ENCODE measurements at regions of chr16 and their contacts with region 1.

Region 1: DNA sequence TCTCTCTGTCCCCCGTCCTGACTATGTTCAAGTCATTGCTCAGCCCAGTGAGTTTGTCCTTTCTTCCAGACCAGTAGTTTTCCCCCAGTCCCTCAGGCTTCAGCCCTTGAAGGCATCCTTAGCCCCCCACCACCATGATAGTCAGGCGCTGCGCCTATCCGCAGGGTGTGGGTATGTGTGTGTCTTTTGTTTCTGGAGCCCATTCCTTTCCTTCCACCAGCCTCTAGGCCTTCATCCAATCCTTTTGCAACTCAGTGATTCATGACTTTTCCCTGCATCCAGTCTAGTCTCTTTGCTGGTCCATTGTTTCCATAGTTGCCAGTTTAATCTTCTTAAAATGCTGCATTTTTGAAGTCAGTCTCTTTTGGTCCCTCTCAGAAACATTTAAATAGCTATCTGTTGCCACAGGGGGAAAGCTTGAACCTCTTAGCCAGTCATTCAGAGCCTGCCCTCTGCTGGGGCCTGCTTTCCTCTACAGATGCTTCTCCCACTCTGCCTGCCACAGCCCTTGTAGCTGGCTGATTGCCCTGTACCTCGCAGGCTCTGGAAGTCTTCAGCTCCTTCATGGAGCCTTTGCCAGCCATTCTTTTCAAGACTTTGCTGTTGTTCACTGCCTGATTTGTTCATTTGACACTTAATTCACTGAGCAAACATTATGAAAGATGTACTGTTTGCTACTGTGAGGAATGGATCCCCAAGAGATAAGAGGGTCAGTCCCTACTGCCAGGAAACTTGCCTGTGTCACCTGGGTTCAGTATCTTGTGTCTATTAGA is 55.9 kb upstream of the ADCY7 start:
- DNase-seq: peak; percentile 74
- ATAC-seq: peak; percentile 95
- H3K4me3 Mint-ChIP-seq: no peak overlapping the region
- H3K27ac Mint-ChIP-seq: peak overlapping the region; percentile 93
- H3K4me1 Mint-ChIP-seq: peaks cover 18% of the 10 kb centered on the region
- H3K27me3 Mint-ChIP-seq: no peaks in the 10 kb centered on the region
- CTCF ChIP-seq: no peak

Region 2: DNA sequence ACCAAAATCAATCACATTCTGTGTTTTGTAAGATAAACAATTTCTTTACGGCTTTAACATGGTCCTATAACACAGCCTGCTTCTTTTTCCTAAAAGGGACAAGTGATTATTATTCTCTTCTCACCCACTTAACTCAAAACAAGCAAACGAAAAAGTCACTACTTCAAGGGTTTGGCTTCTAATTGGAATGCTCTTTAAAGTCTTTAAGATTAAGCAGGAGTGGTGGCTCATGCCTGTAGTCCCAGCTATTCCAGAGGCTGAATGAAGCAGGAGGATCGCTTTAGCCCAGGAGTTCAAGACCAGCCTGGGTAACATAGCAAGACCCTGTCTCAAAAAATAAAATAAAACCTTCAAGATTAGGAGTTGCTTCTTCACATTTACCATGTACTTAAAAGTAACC is 252.0 kb before region 1 on chr16:
- CTCF ChIA-PET with region 1: interaction called, 15 read pairs
- POLR2A ChIA-PET with region 1: no interaction called
- DNase-seq: no peak
- ATAC-seq: no peak
- H3K4me3 Mint-ChIP-seq: no peak overlapping the region
- H3K27ac Mint-ChIP-seq: no peak overlapping the region
- H3K4me1 Mint-ChIP-seq: no peaks in the 10 kb centered on the region; the same call in 1 of the 2 replicates
- H3K27me3 Mint-ChIP-seq: no peaks in the 10 kb centered on the region
- CTCF ChIP-seq: no peak

Region 3: GRCh38 chr16:50002190-50002589 is 208.3 kb before region 1 on chr16:
- CTCF ChIA-PET with region 1: no interaction called
- POLR2A ChIA-PET with region 1: no interaction called
- DNase-seq: no peak
- ATAC-seq: no peak
- H3K4me3 Mint-ChIP-seq: no peak overlapping the region
- H3K27ac Mint-ChIP-seq: no peak overlapping the region
- H3K4me1 Mint-ChIP-seq: no peaks in the 10 kb centered on the region
- H3K27me3 Mint-ChIP-seq: peaks cover 2% of the 10 kb centered on the region
- CTCF ChIP-seq: no peak

Region 4: GRCh38 chr16:50065624-50066481 is 144.6 kb before region 1 on chr16 and contains the start of gene HEATR3:
- CTCF ChIA-PET with region 1: interaction called, 50 read pairs
- POLR2A ChIA-PET with region 1: no interaction called
- DNase-seq: peak; percentile 94
- ATAC-seq: peak; percentile 91
- H3K4me3 Mint-ChIP-seq: peak within 1 kb of the TSS; percentile 78
- H3K27ac Mint-ChIP-seq: peak within 1 kb of the TSS; percentile 58
- H3K4me1 Mint-ChIP-seq: peaks cover 17% of the 10 kb centered on the region
- H3K27me3 Mint-ChIP-seq: no peaks in the 10 kb centered on the region; the same call in 1 of the 2 replicates
- CTCF ChIP-seq: no peak
- total RNA-seq, gene HEATR3: 27.8 to 28.1 TPM (median 28.0 TPM) in 3 replicates

Region 5: DNA sequence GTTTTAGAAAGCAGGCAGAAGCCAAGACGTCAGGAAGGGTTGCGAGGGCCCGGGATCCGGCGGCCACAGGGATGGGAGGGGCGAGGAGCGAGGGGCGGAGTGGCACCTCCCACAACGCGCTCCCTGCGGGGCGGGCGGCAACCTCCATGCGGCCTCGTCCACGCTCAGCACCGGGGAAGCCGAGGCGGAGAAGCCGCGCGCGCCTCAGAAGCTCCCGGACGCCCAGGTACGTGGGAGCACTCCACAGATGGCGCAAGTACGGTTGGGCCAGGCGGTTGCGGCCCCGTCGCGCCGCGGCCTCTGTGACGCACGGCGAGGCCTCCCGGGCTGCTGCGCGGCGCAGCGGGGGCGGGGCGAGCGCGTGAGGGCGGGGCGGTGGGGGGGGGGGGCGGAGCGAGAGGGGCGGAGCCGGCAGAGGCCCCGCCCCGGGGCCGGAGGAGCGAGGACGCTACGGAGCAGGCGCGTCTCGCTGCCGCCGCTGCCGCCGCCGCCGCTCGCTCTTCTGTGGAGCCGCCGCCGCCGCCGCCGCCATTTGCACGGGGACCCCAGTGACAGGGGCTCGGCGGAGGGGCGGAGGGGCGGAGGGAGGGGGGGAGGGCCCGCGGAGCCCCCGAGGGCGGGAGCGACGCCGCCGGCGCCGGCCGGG is 57.5 kb before region 1 on chr16 and contains the start of gene TENT4B:
- CTCF ChIA-PET with region 1: interaction called, 12 read pairs
- POLR2A ChIA-PET with region 1: interaction called, 3 read pairs
- DNase-seq: peak; percentile 77
- ATAC-seq: peak; percentile 83
- H3K4me3 Mint-ChIP-seq: peak within 1 kb of the TSS; percentile 86
- H3K27ac Mint-ChIP-seq: peak within 1 kb of the TSS; percentile 96
- H3K4me1 Mint-ChIP-seq: peaks cover 21% of the 10 kb centered on the region
- H3K27me3 Mint-ChIP-seq: peaks cover 3% of the 10 kb centered on the region; the same call in 1 of the 2 replicates
- CTCF ChIP-seq: no peak
- total RNA-seq, gene TENT4B: 12.7 to 14.3 TPM (median 13.6 TPM) in 3 replicates

Region 6: GRCh38 chr16:50193594-50193993 is 16.9 kb before region 1 on chr16:
- CTCF ChIA-PET with region 1: interaction called, 14 read pairs
- POLR2A ChIA-PET with region 1: interaction called, 3 read pairs
- DNase-seq: no peak
- ATAC-seq: no peak
- H3K4me3 Mint-ChIP-seq: no peak overlapping the region
- H3K27ac Mint-ChIP-seq: no peak overlapping the region
- H3K4me1 Mint-ChIP-seq: 0 out of 2 replicates have a peak, but pooled peaks cover 9% of the 10 kb centered on the region
- H3K27me3 Mint-ChIP-seq: no peaks in the 10 kb centered on the region
- CTCF ChIP-seq: no peak

Region 7: GRCh38 chr16:50288026-50288425 is 77.6 kb after region 1 on chr16:
- CTCF ChIA-PET with region 1: no interaction called
- POLR2A ChIA-PET with region 1: no interaction called
- DNase-seq: no peak
- ATAC-seq: no peak
- H3K4me3 Mint-ChIP-seq: no peak overlapping the region
- H3K27ac Mint-ChIP-seq: no peak overlapping the region
- H3K4me1 Mint-ChIP-seq: no peaks in the 10 kb centered on the region
- H3K27me3 Mint-ChIP-seq: no peaks in the 10 kb centered on the region; the same call in 1 of the 2 replicates
- CTCF ChIP-seq: no peak

Region 8: GRCh38 chr16:50326949-50327402 is 116.5 kb after region 1 on chr16:
- CTCF ChIA-PET with region 1: interaction called, 13 read pairs
- POLR2A ChIA-PET with region 1: no interaction called
- DNase-seq: no peak
- ATAC-seq: peak; percentile 68
- H3K4me3 Mint-ChIP-seq: no peak overlapping the region
- H3K27ac Mint-ChIP-seq: no peak overlapping the region
- H3K4me1 Mint-ChIP-seq: no peaks in the 10 kb centered on the region
- H3K27me3 Mint-ChIP-seq: no peaks in the 10 kb centered on the region
- CTCF ChIP-seq: no peak